ENCODE measurements at regions of chr7 and their contacts with region 1.

Region 1: DNA sequence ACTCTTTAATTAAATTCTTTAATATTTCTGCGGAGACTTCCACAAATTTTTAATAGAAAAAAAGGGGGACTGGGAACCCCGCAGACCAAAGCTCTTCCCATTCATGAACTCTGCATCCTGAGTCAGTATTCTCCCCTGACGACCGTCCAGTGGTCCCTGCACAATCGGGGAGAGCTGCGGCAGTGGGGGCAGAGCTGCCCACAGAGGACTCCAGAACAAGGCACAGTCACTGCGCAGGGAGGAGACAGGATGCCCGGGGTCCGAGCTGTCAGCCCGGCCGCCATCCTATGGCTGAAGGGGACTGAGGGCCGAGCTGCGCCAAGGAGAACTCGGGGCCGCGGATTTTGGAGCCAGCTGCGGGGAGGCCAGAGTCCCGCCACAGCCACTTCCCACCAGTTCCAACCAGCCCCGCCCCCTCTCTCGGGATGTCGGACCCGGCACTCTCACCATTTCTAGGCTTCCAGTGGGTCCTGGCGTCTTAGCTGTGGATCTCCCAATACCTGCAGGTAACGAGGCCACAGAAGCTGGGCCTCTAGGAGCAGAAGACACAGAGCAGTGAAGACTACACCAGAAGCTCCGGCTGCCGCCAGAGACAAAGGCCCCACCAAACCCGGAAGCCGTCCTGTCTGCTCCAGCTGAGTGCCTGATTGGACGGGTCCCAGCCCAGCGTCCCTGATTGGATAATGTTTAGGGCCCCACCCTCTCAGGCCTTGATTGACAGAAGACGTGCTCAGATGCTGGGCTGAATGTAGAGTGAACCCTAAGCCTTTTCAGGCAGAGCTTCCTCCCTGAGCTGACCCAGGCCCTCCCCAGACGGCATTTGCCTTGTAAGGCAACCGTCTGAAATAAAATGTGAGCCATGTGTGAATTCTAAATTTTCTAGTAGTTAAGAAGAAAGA is at the start of gene ERV3-1:
- DNase-seq: peak; percentile 76 to 96 (median 93)
- ATAC-seq: peak; percentile 99
- H3K4me3 ChIP-seq: peak within 1 kb of the TSS; percentile 72
- H3K4me3 Mint-ChIP-seq: peak within 1 kb of the TSS; percentile 75 to 96 (median 94)
- H3K27ac ChIP-seq: peak within 1 kb of the TSS; percentile 81
- H3K27ac Mint-ChIP-seq: peak within 1 kb of the TSS; percentile 73 to 98 (median 94)
- H3K4me1 ChIP-seq: peaks cover 4 to 21% of the 10 kb centered on the region in 2 donors
- H3K4me1 Mint-ChIP-seq: peaks cover 26 to 57% (median 45%) of the 10 kb centered on the region in 7 donors
- H3K27me3 ChIP-seq: no peaks in the 10 kb centered on the region
- H3K27me3 Mint-ChIP-seq: no peaks in the 10 kb centered on the region
- total RNA-seq, gene ERV3-1: 12.2 to 22.9 (median 14.9) TPM

Region 2: GRCh38 chr7:63900394-63901203 is 1105.7 kb before region 1 on chr7:
- CTCF ChIA-PET with region 1: no interaction called
- POLR2A ChIA-PET with region 1: interaction called, 4 read pairs
- intact Hi-C with region 1: loop called in 1 of 2 experiments (anchors 1 kb)
- DNase-seq: peak; percentile 64 to 95 (median 91)
- ATAC-seq: peak; percentile 97
- H3K4me3 ChIP-seq: peak overlapping the region; percentile 84
- H3K4me3 Mint-ChIP-seq: peak overlapping the region; percentile 82 to 100 (median 98)
- H3K27ac ChIP-seq: peak overlapping the region; percentile 89
- H3K27ac Mint-ChIP-seq: peak overlapping the region; percentile 88 to 99 (median 95)
- H3K4me1 ChIP-seq: no peaks in the 10 kb centered on the region
- H3K4me1 Mint-ChIP-seq: peaks cover 0 to 22% (median 9%) of the 10 kb centered on the region in 7 donors
- H3K27me3 ChIP-seq: no peaks in the 10 kb centered on the region
- H3K27me3 Mint-ChIP-seq: peaks cover 0 to 4% (median 0%) of the 10 kb centered on the region in 5 donors

Region 3: GRCh38 chr7:64307254-64308015 is 698.9 kb before region 1 on chr7:
- CTCF ChIA-PET with region 1: no interaction called
- POLR2A ChIA-PET with region 1: interaction called, 6 read pairs
- intact Hi-C with region 1: loop called (anchors 1 kb)
- DNase-seq: peak; percentile 76 to 95 (median 93)
- ATAC-seq: peak; percentile 99
- H3K4me3 ChIP-seq: peak overlapping the region; percentile 95
- H3K4me3 Mint-ChIP-seq: peak overlapping the region; percentile 90 to 100 (median 96)
- H3K27ac ChIP-seq: peak overlapping the region; percentile 83
- H3K27ac Mint-ChIP-seq: peak overlapping the region; percentile 94 to 99 (median 97)
- H3K4me1 ChIP-seq: peaks cover 0 to 13% of the 10 kb centered on the region in 2 donors
- H3K4me1 Mint-ChIP-seq: peaks cover 13 to 30% (median 19%) of the 10 kb centered on the region in 7 donors
- H3K27me3 ChIP-seq: no peaks in the 10 kb centered on the region
- H3K27me3 Mint-ChIP-seq: no peaks in the 10 kb centered on the region

Region 4: DNA sequence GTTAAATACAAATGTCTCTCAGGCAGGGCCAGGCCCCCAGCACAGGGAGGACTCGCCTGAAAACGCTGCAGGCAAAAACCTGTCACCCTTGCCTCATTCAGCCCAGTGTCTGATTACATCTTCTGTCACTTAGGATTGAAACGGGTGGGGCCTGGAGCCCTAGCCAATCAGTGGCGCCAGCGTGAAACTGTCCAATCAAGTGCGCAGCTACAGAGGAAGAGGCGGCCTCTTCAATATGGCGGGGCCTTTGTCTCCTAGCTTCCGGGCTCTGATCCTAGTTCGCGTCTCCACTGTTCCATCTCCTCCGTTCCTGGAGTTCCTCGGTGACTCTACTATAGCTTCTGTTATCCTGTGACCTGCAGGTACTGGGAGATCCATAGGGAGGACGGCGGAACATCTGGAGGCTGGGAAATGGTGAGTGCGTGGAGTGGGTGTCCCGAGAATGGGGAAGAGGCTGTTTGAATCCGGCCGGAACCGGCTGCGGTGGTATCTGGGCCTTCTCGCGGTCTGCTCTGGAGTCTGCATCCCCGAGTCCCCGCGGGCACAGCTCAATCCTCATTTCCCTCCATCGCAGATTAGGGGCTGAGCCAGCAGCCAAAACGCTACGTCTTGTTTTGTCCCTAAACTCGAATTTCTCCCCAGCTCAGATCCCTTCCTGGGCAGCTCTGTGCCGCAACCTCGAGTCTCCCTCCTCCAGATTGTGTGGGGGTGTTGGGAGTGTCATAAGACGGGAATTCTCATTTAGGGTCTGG is 692.4 kb before region 1 on chr7 and contains the start of gene ZNF736:
- CTCF ChIA-PET with region 1: no interaction called
- POLR2A ChIA-PET with region 1: interaction called, 12 read pairs
- intact Hi-C with region 1: no loop called
- DNase-seq: peak; percentile 64 to 92 (median 87)
- ATAC-seq: peak; percentile 100
- H3K4me3 ChIP-seq: peak within 1 kb of the TSS; percentile 81
- H3K4me3 Mint-ChIP-seq: peak within 1 kb of the TSS; percentile 90 to 100 (median 98)
- H3K27ac ChIP-seq: peak within 1 kb of the TSS; percentile 88
- H3K27ac Mint-ChIP-seq: peak within 1 kb of the TSS; percentile 88 to 100 (median 97)
- H3K4me1 ChIP-seq: peaks cover 8 to 12% of the 10 kb centered on the region in 2 donors
- H3K4me1 Mint-ChIP-seq: peaks cover 22 to 54% (median 39%) of the 10 kb centered on the region in 7 donors
- H3K27me3 ChIP-seq: no peaks in the 10 kb centered on the region
- H3K27me3 Mint-ChIP-seq: no peaks in the 10 kb centered on the region
- total RNA-seq, gene ZNF736: 22.8 to 54.2 (median 35.8) TPM

Region 5: DNA sequence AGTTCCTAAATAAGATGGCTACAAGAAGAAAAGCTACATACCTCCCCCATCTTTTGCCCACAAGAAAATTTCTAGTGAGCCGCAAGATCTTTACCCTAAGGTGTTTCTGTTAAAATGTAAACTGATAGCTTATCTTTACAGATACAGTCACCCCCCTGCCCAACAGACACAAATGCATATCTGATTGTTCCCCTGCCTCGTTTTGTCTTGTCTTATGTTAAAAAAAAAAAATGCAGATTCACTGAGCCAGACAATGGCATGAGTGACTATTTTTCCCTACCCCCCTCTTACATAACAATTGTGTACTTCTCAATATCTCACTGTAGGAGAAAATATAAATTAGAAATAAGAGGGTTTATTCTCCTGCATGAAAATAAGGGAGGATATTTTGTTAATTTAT is 203.6 kb before region 1 on chr7:
- CTCF ChIA-PET with region 1: no interaction called
- POLR2A ChIA-PET with region 1: no interaction called
- intact Hi-C with region 1: no loop called
- DNase-seq: no peak
- ATAC-seq: no peak
- H3K4me3 ChIP-seq: no peak overlapping the region
- H3K4me3 Mint-ChIP-seq: no peak overlapping the region
- H3K27ac ChIP-seq: no peak overlapping the region
- H3K27ac Mint-ChIP-seq: peak overlapping the region in 1 of 9 donors; percentile 25
- H3K4me1 ChIP-seq: no peaks in the 10 kb centered on the region
- H3K4me1 Mint-ChIP-seq: peaks cover 4 to 54% (median 40%) of the 10 kb centered on the region in 7 donors
- H3K27me3 ChIP-seq: no peaks in the 10 kb centered on the region
- H3K27me3 Mint-ChIP-seq: no peaks in the 10 kb centered on the region

Region 6: GRCh38 chr7:64839811-64840309 is 166.5 kb before region 1 on chr7:
- CTCF ChIA-PET with region 1: no interaction called
- POLR2A ChIA-PET with region 1: no interaction called
- intact Hi-C with region 1: no loop called
- DNase-seq: no peak
- ATAC-seq: no peak
- H3K4me3 ChIP-seq: no peak overlapping the region
- H3K4me3 Mint-ChIP-seq: no peak overlapping the region
- H3K27ac ChIP-seq: no peak overlapping the region
- H3K27ac Mint-ChIP-seq: no peak overlapping the region
- H3K4me1 ChIP-seq: no peaks in the 10 kb centered on the region
- H3K4me1 Mint-ChIP-seq: no peaks in the 10 kb centered on the region
- H3K27me3 ChIP-seq: no peaks in the 10 kb centered on the region
- H3K27me3 Mint-ChIP-seq: no peaks in the 10 kb centered on the region

Region 7: DNA sequence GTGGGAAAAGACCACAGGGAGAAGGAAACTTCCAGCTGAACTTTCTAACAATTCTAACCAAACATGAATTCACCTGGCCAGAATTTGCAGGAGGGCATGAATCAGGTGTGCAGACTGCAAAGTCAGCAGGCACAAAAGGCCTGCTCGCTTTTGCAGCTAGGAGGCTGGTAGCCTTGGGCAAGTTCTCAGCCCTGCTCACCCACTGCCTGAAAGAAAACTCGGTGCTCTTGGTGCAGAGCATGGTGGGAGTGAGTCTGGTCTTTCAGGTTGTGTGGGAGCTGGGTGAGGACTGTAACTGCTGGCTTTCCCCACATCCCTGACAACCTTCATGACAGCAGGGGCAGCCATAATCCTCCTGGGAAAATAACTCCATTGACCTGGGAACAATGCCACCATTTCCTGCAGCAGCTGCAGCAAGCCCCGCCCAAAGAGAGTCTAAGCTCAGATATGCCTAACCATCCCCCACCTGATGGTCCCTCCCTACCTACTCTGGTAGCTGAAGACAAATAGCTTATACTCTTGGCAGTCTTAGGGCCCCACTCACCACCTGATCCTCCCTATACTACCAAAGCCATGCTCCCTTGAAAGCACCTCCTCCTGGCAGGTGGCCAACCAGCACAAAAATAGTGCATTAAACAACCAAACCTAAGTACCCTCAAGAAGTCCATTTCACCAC is 47.1 kb before region 1 on chr7:
- CTCF ChIA-PET with region 1: no interaction called
- POLR2A ChIA-PET with region 1: no interaction called
- intact Hi-C with region 1: no loop called
- DNase-seq: no peak
- ATAC-seq: no peak
- H3K4me3 ChIP-seq: no peak overlapping the region
- H3K4me3 Mint-ChIP-seq: no peak overlapping the region
- H3K27ac ChIP-seq: no peak overlapping the region
- H3K27ac Mint-ChIP-seq: no peak overlapping the region
- H3K4me1 ChIP-seq: no peaks in the 10 kb centered on the region
- H3K4me1 Mint-ChIP-seq: no peaks in the 10 kb centered on the region
- H3K27me3 ChIP-seq: no peaks in the 10 kb centered on the region
- H3K27me3 Mint-ChIP-seq: peaks cover 0 to 20% (median 5%) of the 10 kb centered on the region in 5 donors

Region 8: DNA sequence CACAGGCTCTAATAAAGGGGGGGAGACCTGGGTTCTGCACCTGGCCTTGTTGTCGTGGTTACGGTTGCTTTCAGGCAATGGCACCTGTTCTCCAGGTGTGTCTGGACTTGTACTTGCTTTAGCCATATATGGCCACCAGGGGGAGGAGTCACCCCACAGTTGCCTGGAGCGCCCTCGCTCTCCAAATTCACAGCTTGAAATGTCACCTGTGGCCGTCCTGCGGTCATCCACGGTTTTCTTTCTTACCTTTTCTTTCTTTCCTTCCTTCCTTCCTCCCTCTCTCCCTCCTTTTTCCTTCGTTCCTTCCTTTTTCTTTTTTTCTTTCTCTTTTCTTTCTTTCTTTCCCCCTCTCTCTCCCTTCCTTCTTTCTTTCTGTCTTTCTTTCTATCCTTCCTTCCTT is 210.1 kb after region 1 on chr7:
- CTCF ChIA-PET with region 1: no interaction called
- POLR2A ChIA-PET with region 1: no interaction called
- intact Hi-C with region 1: no loop called
- DNase-seq: peak; percentile 18 to 72 (median 46)
- ATAC-seq: peak; percentile 80
- H3K4me3 ChIP-seq: no peak overlapping the region
- H3K4me3 Mint-ChIP-seq: peak overlapping the region in 2 of 10 donors; percentile 43 to 58
- H3K27ac ChIP-seq: no peak overlapping the region
- H3K27ac Mint-ChIP-seq: no peak overlapping the region
- H3K4me1 ChIP-seq: no peaks in the 10 kb centered on the region
- H3K4me1 Mint-ChIP-seq: peaks cover 0 to 3% (median 0%) of the 10 kb centered on the region in 7 donors
- H3K27me3 ChIP-seq: no peaks in the 10 kb centered on the region
- H3K27me3 Mint-ChIP-seq: peaks cover 0 to 3% (median 0%) of the 10 kb centered on the region in 5 donors

Region 9: GRCh38 chr7:65373608-65374351 is 367.4 kb after region 1 on chr7 and contains the start of gene ZNF92:
- CTCF ChIA-PET with region 1: no interaction called
- POLR2A ChIA-PET with region 1: interaction called, 20 read pairs
- intact Hi-C with region 1: loop called (anchors 1 to 2 kb)
- DNase-seq: peak; percentile 84 to 95 (median 94)
- ATAC-seq: peak; percentile 99
- H3K4me3 ChIP-seq: peak within 1 kb of the TSS; percentile 87
- H3K4me3 Mint-ChIP-seq: peak within 1 kb of the TSS; percentile 90 to 98 (median 96)
- H3K27ac ChIP-seq: peak within 1 kb of the TSS; percentile 82
- H3K27ac Mint-ChIP-seq: peak within 1 kb of the TSS; percentile 87 to 96 (median 93)
- H3K4me1 ChIP-seq: peaks cover 8 to 21% of the 10 kb centered on the region in 2 donors
- H3K4me1 Mint-ChIP-seq: peaks cover 18 to 57% (median 49%) of the 10 kb centered on the region in 7 donors
- H3K27me3 ChIP-seq: no peaks in the 10 kb centered on the region
- H3K27me3 Mint-ChIP-seq: no peaks in the 10 kb centered on the region
- total RNA-seq, gene ZNF92: 16.3 to 22.5 (median 19.3) TPM

Measured in naive thymus-derived CD4-positive, alpha-beta T cell (primary cell).